ENCODE measurements at regions of chr17 and their contacts with region 1.

Region 1: GRCh38 chr17:9522074-9522473 is 53.5 kb downstream of the STX8 start:
- DNase-seq: peak; percentile 71
- H3K4me3 ChIP-seq: no peak overlapping the region
- H3K27ac ChIP-seq: no peak overlapping the region
- H3K4me1 ChIP-seq: no peaks in the 10 kb centered on the region
- H3K27me3 ChIP-seq: no peaks in the 10 kb centered on the region
- CTCF ChIP-seq: peak; percentile 68

Region 2: GRCh38 chr17:8753976-8754440 is 768.1 kb before region 1 on chr17:
- CTCF ChIA-PET with region 1: no interaction called
- POLR2A ChIA-PET with region 1: no interaction called
- intact Hi-C with region 1: loop called (anchors 10 kb)
- DNase-seq: peak; percentile 52
- H3K4me3 ChIP-seq: no peak overlapping the region
- H3K27ac ChIP-seq: no peak overlapping the region
- H3K4me1 ChIP-seq: no peaks in the 10 kb centered on the region
- H3K27me3 ChIP-seq: no peaks in the 10 kb centered on the region
- CTCF ChIP-seq: peak; percentile 57

Region 3: GRCh38 chr17:8991514-8992285 is 530.4 kb before region 1 on chr17:
- CTCF ChIA-PET with region 1: interaction called, 5 read pairs
- POLR2A ChIA-PET with region 1: no interaction called
- intact Hi-C with region 1: loop called (anchors 2 kb)
- DNase-seq: peak; percentile 86
- H3K4me3 ChIP-seq: no peak overlapping the region
- H3K27ac ChIP-seq: no peak overlapping the region
- H3K4me1 ChIP-seq: no peaks in the 10 kb centered on the region
- H3K27me3 ChIP-seq: no peaks in the 10 kb centered on the region
- CTCF ChIP-seq: peak; percentile 86

Region 4: GRCh38 chr17:9307292-9308042 is 214.6 kb before region 1 on chr17:
- CTCF ChIA-PET with region 1: no interaction called
- POLR2A ChIA-PET with region 1: no interaction called
- intact Hi-C with region 1: loop called (anchors 10 kb)
- DNase-seq: peak; percentile 2
- H3K4me3 ChIP-seq: no peak overlapping the region
- H3K27ac ChIP-seq: peak overlapping the region; percentile 18
- H3K4me1 ChIP-seq: peaks cover 19% of the 10 kb centered on the region
- H3K27me3 ChIP-seq: no peaks in the 10 kb centered on the region
- CTCF ChIP-seq: no peak

Region 5: GRCh38 chr17:9402590-9403199 is 119.4 kb before region 1 on chr17:
- CTCF ChIA-PET with region 1: interaction called, 3 read pairs
- POLR2A ChIA-PET with region 1: no interaction called
- intact Hi-C with region 1: loop called (anchors 2 kb)
- DNase-seq: peak; percentile 71
- H3K4me3 ChIP-seq: no peak overlapping the region
- H3K27ac ChIP-seq: no peak overlapping the region
- H3K4me1 ChIP-seq: no peaks in the 10 kb centered on the region
- H3K27me3 ChIP-seq: no peaks in the 10 kb centered on the region
- CTCF ChIP-seq: peak; percentile 69

Measured in A673 (cell line).